Aorta (tissue), 5 donors: ENCODE measurements at regions of chr16 and their contacts with region 1.

Region 1: DNA sequence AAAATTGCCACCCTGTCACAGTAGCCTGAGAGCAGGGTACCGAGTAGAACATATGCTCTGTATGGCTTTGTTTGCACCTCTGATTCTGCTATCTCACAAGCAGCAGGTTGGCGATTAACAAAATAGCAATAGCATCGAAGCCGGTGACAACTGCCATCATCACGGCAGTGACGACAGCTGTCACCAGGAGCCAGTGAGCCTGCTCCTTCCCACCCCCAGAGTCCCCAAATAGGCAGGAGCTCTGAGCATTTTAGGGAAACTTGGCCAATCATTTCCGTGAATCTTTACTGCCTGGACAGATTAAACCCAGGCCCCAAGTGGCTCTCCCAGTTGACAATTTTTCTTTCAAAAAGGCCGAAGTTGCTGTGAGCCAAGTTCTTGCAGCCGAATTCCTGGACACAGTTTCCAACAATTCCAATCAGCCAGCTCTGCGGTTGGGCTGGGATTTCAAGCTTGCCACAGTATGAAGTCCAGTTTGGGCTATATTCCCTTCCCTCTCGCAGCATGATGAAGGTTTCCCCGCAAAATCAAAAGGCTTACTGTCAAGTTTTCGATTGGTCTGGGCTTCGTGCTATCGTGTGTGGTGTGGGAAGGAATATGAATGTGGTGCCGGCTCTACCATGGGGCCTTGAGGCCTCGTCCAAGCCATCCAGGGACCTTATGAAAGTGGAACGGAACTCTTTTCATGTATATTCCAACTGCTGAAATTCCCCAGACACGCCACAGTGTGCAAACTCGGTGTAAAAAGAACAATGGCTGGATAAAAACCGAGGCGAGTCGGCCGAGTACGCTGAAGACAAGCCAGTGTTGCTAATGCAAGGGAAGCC is 186.6 kb downstream of the C16orf78 start:
- DNase-seq: peak; percentile 65 to 68
- ATAC-seq: no peak
- H3K4me3 ChIP-seq: no peak overlapping the region
- H3K27ac ChIP-seq: no peak overlapping the region
- H3K4me1 ChIP-seq: no peaks in the 10 kb centered on the region
- H3K27me3 ChIP-seq: no peaks in the 10 kb centered on the region

Region 2: GRCh38 chr16:49158029-49158642 is 402.1 kb before region 1 on chr16:
- intact Hi-C with region 1: no loop called
- DNase-seq: no peak
- ATAC-seq: no peak
- H3K4me3 ChIP-seq: no peak overlapping the region
- H3K27ac ChIP-seq: no peak overlapping the region
- H3K4me1 ChIP-seq: no peaks in the 10 kb centered on the region
- H3K27me3 ChIP-seq: no peaks in the 10 kb centered on the region

Region 3: DNA sequence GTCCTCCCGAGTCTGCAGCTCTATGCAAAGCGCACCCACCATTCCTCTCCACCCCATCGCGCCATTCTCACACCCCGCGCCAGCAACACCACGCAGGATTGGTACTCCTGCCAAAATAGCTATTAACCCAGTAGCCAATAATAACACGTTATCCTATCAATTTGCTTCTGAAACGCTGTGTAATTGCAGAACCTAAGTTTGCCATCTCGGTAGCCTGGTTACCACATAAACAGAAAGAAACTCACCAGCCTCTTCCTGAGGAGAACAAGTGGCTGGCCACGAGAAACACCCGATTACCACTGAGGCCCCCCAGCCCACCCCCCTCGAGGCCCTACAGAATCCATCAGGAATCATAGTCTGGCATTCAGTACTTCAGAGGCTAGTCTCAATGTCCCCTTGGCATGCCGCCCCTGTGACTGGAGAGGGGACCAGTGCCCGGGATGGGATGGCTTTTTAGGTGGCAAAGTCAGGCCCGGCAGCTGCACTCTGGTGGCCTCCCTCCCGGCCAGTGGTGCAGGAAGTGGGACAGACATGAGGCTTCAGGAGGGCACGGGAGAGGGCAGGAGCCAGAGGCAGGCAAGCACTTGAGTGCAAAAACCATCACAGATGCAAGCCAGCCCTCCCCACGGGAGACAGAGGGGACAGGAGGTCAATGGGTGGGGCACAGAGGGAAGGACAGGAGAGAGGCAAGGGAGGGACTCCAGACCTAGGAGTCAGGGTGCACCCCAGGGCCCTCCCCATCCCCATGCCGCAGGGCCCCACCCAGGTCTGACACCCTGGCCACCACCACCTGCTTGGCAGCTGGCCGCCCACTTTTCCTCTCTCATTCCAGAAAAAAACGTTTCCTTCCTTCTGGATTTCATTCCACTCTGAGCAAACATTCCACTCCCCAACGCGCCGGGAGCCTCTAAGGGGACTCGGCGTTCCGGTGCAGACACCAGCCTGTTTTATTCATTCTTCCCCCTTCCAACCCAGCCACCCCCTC is 103.2 kb after region 1 on chr16:
- intact Hi-C with region 1: loop called in 1 of 2 experiments (anchors 10 kb)
- DNase-seq: peak; percentile 62 to 80
- ATAC-seq: peak; percentile 61
- H3K4me3 ChIP-seq: no peak overlapping the region
- H3K27ac ChIP-seq: peak overlapping the region in 1 of 2 donors; percentile 48
- H3K4me1 ChIP-seq: no peaks in the 10 kb centered on the region
- H3K27me3 ChIP-seq: no peaks in the 10 kb centered on the region